Endothelial cell of umbilical vein (primary cell): ENCODE measurements at regions of chr1 and their contacts with region 1.

Region 1: DNA sequence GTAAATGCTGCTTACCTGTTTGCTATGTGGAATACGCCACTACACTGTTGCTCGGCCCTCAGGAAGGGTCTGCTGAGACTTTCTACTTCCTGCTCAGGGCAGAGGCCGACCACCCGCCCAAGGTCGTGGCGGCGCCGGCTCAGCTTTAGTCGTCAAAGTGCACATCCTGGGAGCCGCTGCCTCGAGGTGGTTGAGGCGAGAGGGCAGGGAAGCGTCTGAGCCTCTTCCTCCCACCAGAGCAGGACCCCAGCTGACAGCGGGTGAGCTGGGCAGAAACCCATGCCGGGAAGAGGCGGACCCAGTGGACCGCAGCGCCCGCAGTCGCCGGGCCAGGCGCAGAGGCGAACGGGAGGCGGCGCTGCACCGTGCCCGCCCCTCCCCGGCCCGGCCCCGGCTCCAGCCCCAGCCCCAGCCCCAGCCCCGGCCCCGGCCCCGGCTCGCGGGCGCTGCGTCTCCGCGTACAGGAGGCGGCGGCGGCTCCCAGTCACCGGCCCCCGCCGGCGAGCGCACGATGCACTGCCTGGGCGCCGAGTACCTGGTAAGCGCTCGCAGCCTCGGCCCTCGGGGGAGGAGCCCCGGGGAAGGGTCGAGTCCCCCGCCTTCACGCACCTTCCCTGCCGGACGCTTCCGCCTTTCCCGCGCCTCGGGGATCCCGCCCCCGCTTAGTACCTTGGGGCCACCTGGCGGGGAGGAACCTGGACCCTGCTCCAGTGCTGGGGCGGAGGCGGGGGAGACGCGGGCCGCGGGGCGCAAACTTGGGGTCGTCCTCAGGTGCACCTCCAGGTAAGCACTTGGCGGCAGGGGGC is at the start of gene SLC44A3:
- DNase-seq: peak; percentile 33
- H3K4me3 ChIP-seq: peak within 1 kb of the TSS in 2 of 3 experiments; percentile 51 to 56
- H3K27ac ChIP-seq: no peak within 1 kb of the TSS
- H3K4me1 ChIP-seq: peaks cover 2% of the 10 kb centered on the region
- H3K27me3 ChIP-seq: peaks cover 42 to 49% of the 10 kb centered on the region in 2 experiments
- CTCF ChIP-seq: peak in 1 of 2 donors; percentile 45
- POLR2A ChIP-seq: no peak
- total RNA-seq, gene SLC44A3: 0.42 and 0.58 TPM in 2 replicates

Region 2: GRCh38 chr1:94832446-94832845 is 12.3 kb after region 1 on chr1:
- CTCF ChIA-PET with region 1: interaction called, 3 read pairs
- POLR2A ChIA-PET with region 1: no interaction called
- dilution Hi-C with region 1: no loop called
- intact Hi-C with region 1: loop called (anchors 1 kb)
- DNase-seq: no peak
- H3K4me3 ChIP-seq: no peak overlapping the region
- H3K27ac ChIP-seq: no peak overlapping the region
- H3K4me1 ChIP-seq: no peaks in the 10 kb centered on the region
- H3K27me3 ChIP-seq: peaks cover 13 to 17% of the 10 kb centered on the region in 2 experiments
- CTCF ChIP-seq: no peak
- POLR2A ChIP-seq: no peak